CD8-positive, alpha-beta T cell (primary cell): ENCODE measurements at regions of chr3 and their contacts with region 1.

Region 1: DNA sequence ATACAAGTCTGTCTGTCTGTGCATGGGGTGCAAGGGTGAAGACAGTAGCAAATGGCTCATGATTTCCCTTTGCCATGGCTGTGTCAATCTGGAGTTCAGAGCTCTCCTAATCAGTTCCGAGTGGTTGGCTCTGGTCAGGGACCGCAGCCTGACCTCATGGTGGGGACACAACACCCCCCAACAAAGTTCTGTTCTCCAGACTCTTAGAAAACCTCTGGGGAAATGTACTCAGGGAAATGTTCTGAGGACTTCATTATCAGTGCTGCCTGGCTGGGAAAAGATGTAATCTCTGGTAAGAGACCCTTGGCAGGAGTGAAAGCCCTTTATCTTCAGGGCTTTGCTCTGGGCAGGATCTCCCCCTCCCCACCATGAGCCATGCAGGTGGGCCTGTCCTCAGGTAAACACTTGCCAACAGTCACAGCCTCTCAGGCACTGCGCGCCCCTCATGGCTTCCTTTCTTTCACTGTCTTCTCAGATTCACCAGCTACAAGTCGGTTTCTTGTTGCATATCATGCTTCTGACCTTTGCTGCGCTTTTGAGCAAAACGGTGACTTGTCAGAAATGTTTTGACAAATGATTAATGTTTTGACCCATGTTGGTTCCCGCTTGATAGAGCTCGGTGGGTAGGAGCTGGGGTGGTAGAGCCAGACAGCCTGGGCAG is 95.5 kb downstream of the ST6GAL1 start:
- DNase-seq: peak in 4 of 9 experiments; percentile 39 to 72 (median 48)
- ATAC-seq: peak; percentile 3
- H3K4me3 ChIP-seq: peak overlapping the region; percentile 52 to 71
- H3K4me3 Mint-ChIP-seq: peak overlapping the region; percentile 83
- H3K27ac ChIP-seq: peak overlapping the region; percentile 62 to 64
- H3K27ac Mint-ChIP-seq: peak overlapping the region; percentile 97
- H3K4me1 ChIP-seq: peaks cover 44% of the 10 kb centered on the region
- H3K4me1 Mint-ChIP-seq: peaks cover 68% of the 10 kb centered on the region
- H3K27me3 ChIP-seq: no peaks in the 10 kb centered on the region
- H3K27me3 Mint-ChIP-seq: no peaks in the 10 kb centered on the region
- CTCF ChIP-seq: no peak

Region 2: GRCh38 chr3:186705882-186706780 is 319.7 kb before region 1 on chr3:
- CTCF ChIA-PET with region 1: no interaction called
- POLR2A ChIA-PET with region 1: no interaction called
- intact Hi-C with region 1: no loop called
- DNase-seq: peak in 5 of 9 experiments; percentile 4 to 77 (median 66)
- ATAC-seq: peak; percentile 99
- H3K4me3 ChIP-seq: no peak overlapping the region
- H3K4me3 Mint-ChIP-seq: no peak overlapping the region
- H3K27ac ChIP-seq: no peak overlapping the region
- H3K27ac Mint-ChIP-seq: no peak overlapping the region
- H3K4me1 ChIP-seq: no peaks in the 10 kb centered on the region
- H3K4me1 Mint-ChIP-seq: peaks cover 11% of the 10 kb centered on the region
- H3K27me3 ChIP-seq: peaks cover 0 to 10% of the 10 kb centered on the region in 2 experiments
- H3K27me3 Mint-ChIP-seq: peaks cover 34% of the 10 kb centered on the region
- CTCF ChIP-seq: no peak

Region 3: DNA sequence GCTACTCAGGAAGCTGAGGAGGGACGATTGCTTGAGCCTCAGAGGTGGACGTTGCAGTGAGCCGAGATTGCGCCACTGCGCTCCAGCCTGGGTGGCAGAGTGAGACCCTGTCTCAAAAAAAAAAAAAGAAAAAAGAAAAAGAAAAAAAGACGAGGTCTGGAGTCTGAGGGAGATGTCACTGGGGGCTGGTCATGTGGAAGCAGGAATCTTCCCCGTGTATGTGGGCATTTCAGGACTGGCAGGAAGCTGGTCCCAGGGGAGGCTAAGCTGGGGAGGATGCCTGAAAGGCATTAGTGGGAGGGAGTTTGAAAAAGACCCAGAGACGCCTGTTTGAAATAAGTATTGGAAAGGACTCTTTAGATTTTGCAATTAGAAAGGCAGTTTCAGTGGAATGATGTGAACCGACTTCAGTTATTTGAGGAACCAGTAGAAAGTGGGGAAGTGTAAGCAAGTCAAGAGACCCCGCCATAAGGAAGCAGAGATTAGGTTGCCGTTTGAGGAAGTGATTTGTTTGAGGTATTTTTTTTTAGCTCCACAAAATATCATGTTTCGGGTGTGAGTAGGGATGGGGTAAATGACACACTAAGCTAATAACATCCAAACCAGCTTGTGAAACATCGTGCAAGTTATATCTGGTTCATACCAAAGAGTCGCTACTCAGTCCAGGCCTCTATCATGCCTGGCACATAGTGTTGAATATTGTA is 40.0 kb before region 1 on chr3:
- CTCF ChIA-PET with region 1: no interaction called
- POLR2A ChIA-PET with region 1: interaction called, 6 read pairs
- intact Hi-C with region 1: loop called in 1 of 2 experiments (anchors 5 kb)
- DNase-seq: peak in 1 of 9 experiments; percentile 11
- ATAC-seq: no peak
- H3K4me3 ChIP-seq: no peak overlapping the region
- H3K4me3 Mint-ChIP-seq: no peak overlapping the region
- H3K27ac ChIP-seq: no peak overlapping the region
- H3K27ac Mint-ChIP-seq: peak overlapping the region; percentile 72
- H3K4me1 ChIP-seq: peaks cover 3% of the 10 kb centered on the region
- H3K4me1 Mint-ChIP-seq: peaks cover 48% of the 10 kb centered on the region
- H3K27me3 ChIP-seq: no peaks in the 10 kb centered on the region
- H3K27me3 Mint-ChIP-seq: no peaks in the 10 kb centered on the region
- CTCF ChIP-seq: no peak

Region 4: GRCh38 chr3:187011915-187012314 is 13.9 kb before region 1 on chr3:
- CTCF ChIA-PET with region 1: no interaction called
- POLR2A ChIA-PET with region 1: interaction called, 8 read pairs
- intact Hi-C with region 1: loop called (anchors 1 to 2 kb)
- DNase-seq: peak in 1 of 9 experiments; percentile 19
- ATAC-seq: no peak
- H3K4me3 ChIP-seq: no peak overlapping the region
- H3K4me3 Mint-ChIP-seq: peak overlapping the region; percentile 29
- H3K27ac ChIP-seq: peak overlapping the region in 1 of 2 experiments; percentile 58
- H3K27ac Mint-ChIP-seq: peak overlapping the region; percentile 98
- H3K4me1 ChIP-seq: peaks cover 38% of the 10 kb centered on the region
- H3K4me1 Mint-ChIP-seq: peaks cover 75% of the 10 kb centered on the region
- H3K27me3 ChIP-seq: no peaks in the 10 kb centered on the region
- H3K27me3 Mint-ChIP-seq: no peaks in the 10 kb centered on the region
- CTCF ChIP-seq: no peak

Region 5: GRCh38 chr3:187041362-187042307 is 15.8 kb after region 1 on chr3:
- CTCF ChIA-PET with region 1: interaction called, 17 read pairs
- POLR2A ChIA-PET with region 1: interaction called, 24 read pairs
- intact Hi-C with region 1: loop called (anchors 1 kb)
- DNase-seq: peak in 8 of 9 experiments; percentile 38 to 84 (median 62)
- ATAC-seq: peak; percentile 95
- H3K4me3 ChIP-seq: peak overlapping the region in 1 of 2 experiments; percentile 5
- H3K4me3 Mint-ChIP-seq: peak overlapping the region; percentile 49
- H3K27ac ChIP-seq: peak overlapping the region; percentile 44 to 86
- H3K27ac Mint-ChIP-seq: peak overlapping the region; percentile 95
- H3K4me1 ChIP-seq: peaks cover 80% of the 10 kb centered on the region
- H3K4me1 Mint-ChIP-seq: peaks cover 82% of the 10 kb centered on the region
- H3K27me3 ChIP-seq: no peaks in the 10 kb centered on the region
- H3K27me3 Mint-ChIP-seq: no peaks in the 10 kb centered on the region
- CTCF ChIP-seq: no peak

Region 6: GRCh38 chr3:187066228-187066995 is 40.6 kb after region 1 on chr3:
- CTCF ChIA-PET with region 1: interaction called, 8 read pairs
- POLR2A ChIA-PET with region 1: interaction called, 5 read pairs
- intact Hi-C with region 1: loop called (anchors 1 kb)
- DNase-seq: peak; percentile 15 to 80 (median 54)
- ATAC-seq: peak; percentile 92
- H3K4me3 ChIP-seq: no peak overlapping the region
- H3K4me3 Mint-ChIP-seq: no peak overlapping the region
- H3K27ac ChIP-seq: no peak overlapping the region
- H3K27ac Mint-ChIP-seq: peak overlapping the region; percentile 94
- H3K4me1 ChIP-seq: peaks cover 35% of the 10 kb centered on the region
- H3K4me1 Mint-ChIP-seq: peaks cover 64% of the 10 kb centered on the region
- H3K27me3 ChIP-seq: no peaks in the 10 kb centered on the region
- H3K27me3 Mint-ChIP-seq: no peaks in the 10 kb centered on the region
- CTCF ChIP-seq: peak; percentile 44